Activated CD4-positive, alpha-beta memory T cell treated with anti-CD3 and anti-CD28 coated beads, Interleukin-2, amount 10 ng/mL, durations not matched to agents 7 days and 5 days (primary cell): ENCODE measurements at regions of chr10 and their contacts with region 1.

Region 1: DNA sequence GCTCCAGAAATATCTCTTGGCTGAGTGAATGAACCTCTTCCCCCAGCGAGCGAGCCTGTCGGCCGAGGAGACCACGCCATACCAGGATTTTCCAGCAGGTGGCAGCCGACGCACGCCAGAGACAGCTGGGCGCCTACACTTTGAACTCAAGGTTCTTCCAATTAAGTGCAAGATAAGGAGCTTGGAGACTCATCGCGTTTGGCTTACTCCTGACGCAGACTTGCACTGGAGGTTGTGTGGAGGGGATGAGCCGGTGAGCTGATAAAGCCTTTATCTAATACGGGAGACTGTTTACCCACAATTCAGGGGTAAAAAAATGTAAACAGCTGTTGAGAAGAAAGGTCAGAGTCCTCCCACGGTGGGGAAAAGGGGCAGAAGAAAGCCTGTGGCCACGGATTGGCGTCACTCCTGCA is 45.9 kb upstream of the EMX2 start:
- DNase-seq: peak; percentile 65
- H3K4me3 Mint-ChIP-seq: no peak overlapping the region
- H3K27ac Mint-ChIP-seq: no peak overlapping the region
- H3K4me1 Mint-ChIP-seq: no peaks in the 10 kb centered on the region
- H3K27me3 Mint-ChIP-seq: peaks cover 29% of the 10 kb centered on the region

Region 2: GRCh38 chr10:118241229-118242137 is 744.9 kb after region 1 on chr10:
- CTCF ChIA-PET with region 1: interaction called, 30 read pairs
- POLR2A ChIA-PET with region 1: no interaction called
- DNase-seq: peak; percentile 66
- H3K4me3 Mint-ChIP-seq: no peak overlapping the region
- H3K27ac Mint-ChIP-seq: no peak overlapping the region
- H3K4me1 Mint-ChIP-seq: no peaks in the 10 kb centered on the region
- H3K27me3 Mint-ChIP-seq: peaks cover 40% of the 10 kb centered on the region